H1 (cell line): ENCODE measurements at regions of chr12 and their contacts with region 1.

Region 1: GRCh38 chr12:120228291-120229070 is 27.6 kb upstream of the RPLP0 start:
- DNase-seq: peak; percentile 90 to 93
- H3K4me3 ChIP-seq: peak overlapping the region in 3 of 4 experiments; percentile 30 to 53 (median 49); a peak in 5 of 8 replicates
- H3K27ac ChIP-seq: peak overlapping the region; percentile 96
- H3K4me1 ChIP-seq: peaks cover 33 to 69% (median 42%) of the 10 kb centered on the region in 4 experiments
- H3K27me3 ChIP-seq: no peaks in the 10 kb centered on the region
- CTCF ChIP-seq: peak in 2 of 3 experiments; percentile 92 to 99; a peak in 3 of 4 replicates
- EP300 ChIP-seq: peak in 1 of 2 experiments; percentile 97; a peak in 1 of 3 replicates
- POLR2A ChIP-seq: peak in 1 of 2 experiments; percentile 77; a peak in 2 of 3 replicates
- RAD21 ChIP-seq: peak; percentile 97 to 98

Region 2: DNA sequence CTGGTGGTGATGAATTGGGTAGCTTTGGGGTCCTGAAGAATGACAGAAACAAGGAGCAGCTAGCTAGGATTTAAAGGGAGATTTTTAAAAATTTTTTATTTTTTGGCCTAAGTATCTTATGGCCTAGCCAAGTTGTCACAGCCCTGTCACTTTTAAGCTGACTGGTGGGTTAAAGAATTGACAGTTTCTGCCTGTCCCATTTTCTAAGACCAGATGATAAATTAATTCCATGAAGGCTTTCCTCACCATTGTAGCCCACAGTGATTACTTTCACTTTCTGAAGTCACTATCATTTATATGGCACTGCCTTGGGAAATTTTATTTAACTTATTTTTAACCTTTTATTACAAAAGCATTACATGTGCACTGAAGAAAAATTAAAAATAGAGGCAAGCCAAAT is 196.2 kb before region 1 on chr12:
- CTCF ChIA-PET with region 1: no interaction called
- POLR2A ChIA-PET with region 1: no interaction called
- DNase-seq: no peak
- H3K4me3 ChIP-seq: no peak overlapping the region
- H3K27ac ChIP-seq: no peak overlapping the region
- H3K4me1 ChIP-seq: no peaks in the 10 kb centered on the region
- H3K27me3 ChIP-seq: peaks cover 0 to 1% (median 0%) of the 10 kb centered on the region in 4 experiments; a peak in 1 of 7 replicates
- CTCF ChIP-seq: no peak
- EP300 ChIP-seq: no peak
- POLR2A ChIP-seq: no peak
- RAD21 ChIP-seq: no peak

Region 3: DNA sequence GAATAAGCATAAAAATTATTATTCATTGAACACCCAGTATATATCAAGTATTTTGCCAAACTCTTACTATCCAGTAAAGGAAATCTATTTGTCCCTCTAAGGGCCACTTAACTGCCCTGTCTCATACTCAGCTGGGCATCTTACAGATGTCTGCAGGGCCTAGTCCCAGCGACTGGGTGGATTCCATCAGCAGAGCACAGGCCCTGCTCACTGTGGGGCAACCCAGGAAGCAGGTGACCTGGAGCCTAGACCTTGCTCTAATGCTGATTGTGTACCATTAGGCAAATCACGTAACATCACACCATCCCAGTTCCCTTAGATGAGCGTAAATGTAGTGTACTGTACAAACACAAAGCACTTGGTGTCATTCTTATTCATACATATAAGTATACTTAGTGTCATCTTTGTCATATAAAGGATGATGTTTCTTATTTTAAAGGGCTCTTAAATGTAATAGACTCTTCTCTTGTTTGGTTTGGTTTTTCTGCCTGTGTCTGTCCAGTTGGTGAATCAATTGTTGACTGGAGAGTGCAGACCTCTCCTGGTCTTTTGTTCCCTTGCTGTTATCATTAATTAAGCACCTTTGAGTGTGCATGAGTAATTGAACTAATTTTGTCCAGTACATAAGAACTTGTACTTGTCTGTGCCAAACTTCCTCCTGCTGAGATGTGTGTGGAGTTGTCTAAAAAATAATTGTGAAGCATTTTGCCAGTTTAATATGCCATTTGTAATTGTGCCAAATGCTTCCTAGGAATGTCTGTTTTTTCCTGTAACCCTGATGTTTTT is 161.2 kb before region 1 on chr12:
- CTCF ChIA-PET with region 1: no interaction called
- POLR2A ChIA-PET with region 1: no interaction called
- DNase-seq: no peak
- H3K4me3 ChIP-seq: no peak overlapping the region
- H3K27ac ChIP-seq: no peak overlapping the region
- H3K4me1 ChIP-seq: peaks cover 0 to 4% (median 1%) of the 10 kb centered on the region in 4 experiments; a peak in 2 of 7 replicates
- H3K27me3 ChIP-seq: no peaks in the 10 kb centered on the region
- CTCF ChIP-seq: no peak
- EP300 ChIP-seq: no peak
- POLR2A ChIP-seq: no peak
- RAD21 ChIP-seq: no peak

Region 4: GRCh38 chr12:120116792-120117651 is 111.5 kb before region 1 on chr12:
- CTCF ChIA-PET with region 1: no interaction called
- POLR2A ChIA-PET with region 1: interaction called, 11 read pairs
- DNase-seq: peak; percentile 85 to 99
- H3K4me3 ChIP-seq: peak overlapping the region; percentile 63 to 93 (median 89)
- H3K27ac ChIP-seq: no peak overlapping the region; the same call in 1 of the 2 replicates
- H3K4me1 ChIP-seq: peaks cover 5 to 14% (median 9%) of the 10 kb centered on the region in 4 experiments; a peak in 6 of 7 replicates
- H3K27me3 ChIP-seq: no peaks in the 10 kb centered on the region
- CTCF ChIP-seq: no peak
- EP300 ChIP-seq: no peak
- POLR2A ChIP-seq: peak in 1 of 2 experiments; percentile 57; a peak in 2 of 3 replicates
- RAD21 ChIP-seq: no peak

Region 5: DNA sequence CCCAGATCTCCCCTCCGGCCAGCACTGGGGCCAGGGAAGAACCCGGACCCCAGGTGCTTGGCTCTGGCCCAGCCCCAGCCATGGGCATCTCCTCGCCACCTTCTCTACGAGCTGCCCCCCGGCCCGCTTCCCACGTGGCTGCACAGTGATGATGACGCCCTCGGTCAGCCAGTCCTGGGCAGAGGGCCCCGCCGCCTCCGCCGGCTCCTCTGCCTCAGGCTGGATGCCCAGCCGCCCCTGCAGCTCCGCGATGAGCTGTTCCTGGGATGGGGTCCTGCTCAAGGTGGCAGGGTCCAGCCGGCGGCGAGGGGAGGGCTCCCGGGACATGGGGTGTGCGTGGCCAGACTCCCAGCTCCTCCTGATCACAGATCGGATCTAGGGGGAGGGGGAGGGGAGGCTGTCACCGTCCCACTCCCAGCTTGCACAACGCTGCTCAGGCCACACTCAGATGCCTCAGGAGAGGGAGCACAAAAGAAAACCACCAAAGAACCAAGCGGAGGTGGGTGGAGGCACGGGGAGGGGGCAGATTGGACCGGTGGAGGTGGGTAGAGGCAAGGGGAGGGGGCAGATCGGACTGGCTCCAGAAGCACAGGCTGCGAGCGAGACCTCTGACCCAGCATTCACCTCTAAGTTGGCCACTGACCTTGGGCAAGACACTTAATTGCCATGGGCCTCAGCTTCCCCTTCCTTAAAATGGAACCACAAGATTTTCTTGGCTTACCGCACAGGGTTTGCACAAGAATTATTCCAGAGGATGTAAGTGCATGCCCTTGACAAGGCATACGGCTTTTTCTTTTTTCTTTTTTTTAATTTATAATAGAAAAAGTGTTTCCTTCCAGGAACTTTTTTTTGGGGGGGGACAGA is 11.5 kb before region 1 on chr12:
- CTCF ChIA-PET with region 1: interaction called, 31 read pairs
- POLR2A ChIA-PET with region 1: interaction called, 1,305 read pairs
- DNase-seq: no peak
- H3K4me3 ChIP-seq: no peak overlapping the region
- H3K27ac ChIP-seq: no peak overlapping the region
- H3K4me1 ChIP-seq: no peaks in the 10 kb centered on the region
- H3K27me3 ChIP-seq: no peaks in the 10 kb centered on the region
- CTCF ChIP-seq: no peak
- EP300 ChIP-seq: no peak
- POLR2A ChIP-seq: no peak
- RAD21 ChIP-seq: no peak

Region 6: DNA sequence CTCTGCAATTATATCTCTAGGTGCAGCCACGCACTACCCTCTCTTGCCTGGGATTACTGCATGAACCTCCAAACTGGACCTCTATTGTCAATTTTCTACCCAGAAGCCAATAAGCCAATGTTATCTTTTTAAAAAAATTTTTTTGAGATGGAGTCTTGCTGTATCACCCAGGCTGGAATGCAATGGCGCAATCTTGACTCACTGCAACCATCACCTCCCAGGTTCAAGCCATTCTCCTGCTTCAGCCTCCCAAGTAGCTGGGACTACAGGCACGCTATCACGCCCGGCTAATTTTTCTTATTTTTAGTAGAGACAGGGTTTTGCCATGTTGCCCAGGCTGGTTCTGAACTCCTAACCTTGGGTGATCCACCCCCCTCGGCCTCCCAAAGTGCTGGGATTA is 48.3 kb after region 1 on chr12:
- CTCF ChIA-PET with region 1: interaction called, 91 read pairs
- POLR2A ChIA-PET with region 1: interaction called, 4,270 read pairs
- DNase-seq: no peak
- H3K4me3 ChIP-seq: no peak overlapping the region
- H3K27ac ChIP-seq: no peak overlapping the region
- H3K4me1 ChIP-seq: no peaks in the 10 kb centered on the region
- H3K27me3 ChIP-seq: no peaks in the 10 kb centered on the region
- CTCF ChIP-seq: no peak
- EP300 ChIP-seq: no peak
- POLR2A ChIP-seq: no peak
- RAD21 ChIP-seq: no peak

Region 7: DNA sequence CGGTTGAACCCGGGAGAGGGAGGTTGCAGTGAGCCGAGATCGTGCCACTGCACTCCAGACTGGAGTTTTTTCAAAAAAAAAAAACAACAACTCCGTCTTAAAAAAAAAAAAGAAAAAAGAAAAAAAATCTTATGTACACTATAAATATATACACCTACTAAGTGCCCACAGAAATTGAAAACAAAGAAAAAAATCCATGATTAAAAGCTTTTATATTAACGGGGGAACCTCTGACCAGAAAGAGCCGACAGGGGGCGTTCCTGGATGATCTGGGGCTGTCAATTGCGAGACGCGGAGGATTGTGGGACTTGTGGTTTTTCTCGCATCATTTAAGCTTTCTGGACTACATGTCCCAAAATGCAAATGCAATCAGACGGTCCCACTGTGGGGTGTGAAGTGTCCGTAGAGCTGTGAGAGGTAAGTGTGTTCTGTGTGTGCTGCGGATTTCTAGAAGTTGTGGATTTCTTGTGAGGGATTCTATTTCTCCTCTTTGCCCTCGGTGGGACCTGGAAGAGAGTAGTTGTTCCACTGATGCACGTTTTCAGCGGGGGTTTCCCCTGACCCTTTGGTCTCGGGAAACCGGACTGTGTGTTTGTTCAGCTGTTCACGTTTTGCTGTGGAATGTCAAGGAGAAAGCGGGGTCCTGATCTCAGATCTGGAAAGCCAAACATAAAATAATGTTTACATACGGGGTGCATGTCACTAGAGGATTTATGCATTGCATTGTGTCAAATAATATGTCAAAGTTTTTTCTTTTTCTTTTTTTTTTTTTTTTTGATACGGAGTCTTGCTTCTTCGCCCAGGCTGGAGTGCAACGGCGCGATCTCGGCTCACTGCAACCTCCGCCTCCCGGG is 73.7 kb after region 1 on chr12 and contains the start of gene SIRT4:
- CTCF ChIA-PET with region 1: interaction called, 148 read pairs
- POLR2A ChIA-PET with region 1: interaction called, 4,270 read pairs
- DNase-seq: peak in 1 of 2 experiments; percentile 87
- H3K4me3 ChIP-seq: peak within 1 kb of the TSS; percentile 79 to 98 (median 88)
- H3K27ac ChIP-seq: peak within 1 kb of the TSS; percentile 84
- H3K4me1 ChIP-seq: no peaks in the 10 kb centered on the region
- H3K27me3 ChIP-seq: no peaks in the 10 kb centered on the region
- CTCF ChIP-seq: peak; percentile 68 to 81 (median 69)
- EP300 ChIP-seq: peak in 1 of 2 experiments; percentile 88; a peak in 1 of 3 replicates
- POLR2A ChIP-seq: no peak
- RAD21 ChIP-seq: peak in 1 of 2 experiments; percentile 26; a peak in 1 of 4 replicates
- total RNA-seq, gene SIRT4: 2.3 and 4.1 TPM in 2 replicates

Region 8: DNA sequence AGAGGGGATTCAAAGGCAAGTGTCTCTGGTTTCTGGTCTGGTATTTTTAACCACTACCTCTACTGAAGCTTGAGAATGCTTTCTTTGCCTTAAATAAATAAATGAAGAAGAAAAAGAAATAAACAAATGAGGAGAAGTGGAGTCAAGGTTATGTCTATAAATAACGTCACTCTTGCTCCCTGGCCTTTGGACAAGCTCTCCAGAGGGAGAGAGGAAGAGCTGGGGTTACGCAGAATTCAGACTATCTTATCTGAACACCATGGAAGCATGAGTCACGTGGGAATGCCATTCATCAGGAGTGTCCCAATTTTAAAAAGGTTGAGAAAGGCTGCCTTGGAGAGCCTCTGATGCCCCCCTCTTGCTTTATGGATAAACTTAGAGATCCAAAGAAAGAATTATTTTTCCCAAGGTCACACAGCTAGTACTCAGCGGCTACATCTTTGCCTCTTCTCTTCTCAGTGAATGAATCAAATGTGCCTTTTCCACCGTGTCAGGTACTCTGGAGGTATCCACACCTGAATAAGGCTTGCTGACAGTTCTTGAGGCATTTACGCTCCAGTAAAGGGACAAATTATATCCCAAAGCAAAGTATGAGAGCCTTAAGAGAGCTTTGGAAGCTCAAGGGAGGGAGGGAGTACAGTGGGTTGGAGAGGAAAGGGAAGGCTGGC is 153.4 kb after region 1 on chr12:
- CTCF ChIA-PET with region 1: no interaction called
- POLR2A ChIA-PET with region 1: no interaction called
- DNase-seq: no peak
- H3K4me3 ChIP-seq: no peak overlapping the region
- H3K27ac ChIP-seq: no peak overlapping the region
- H3K4me1 ChIP-seq: peaks cover 0 to 3% (median 1%) of the 10 kb centered on the region in 4 experiments; a peak in 4 of 7 replicates
- H3K27me3 ChIP-seq: no peaks in the 10 kb centered on the region
- CTCF ChIP-seq: no peak
- EP300 ChIP-seq: no peak
- POLR2A ChIP-seq: no peak
- RAD21 ChIP-seq: no peak